ENCODE measurements at regions of chr6 and their contacts with region 1.

Region 1: GRCh38 chr6:20401205-20402091 is at the start of gene E2F3:
- DNase-seq: peak; percentile 98 to 100 (median 99)
- ATAC-seq: peak; percentile 83
- H3K4me3 ChIP-seq: peak within 1 kb of the TSS; percentile 71 to 86
- H3K4me3 Mint-ChIP-seq: peak within 1 kb of the TSS; percentile 96
- H3K27ac ChIP-seq: peak within 1 kb of the TSS; percentile 63 to 68
- H3K27ac Mint-ChIP-seq: peak within 1 kb of the TSS; percentile 72
- H3K4me1 ChIP-seq: peaks cover 10% of the 10 kb centered on the region
- H3K4me1 Mint-ChIP-seq: peaks cover 40% of the 10 kb centered on the region
- H3K27me3 ChIP-seq: no peaks in the 10 kb centered on the region
- H3K27me3 Mint-ChIP-seq: no peaks in the 10 kb centered on the region
- CTCF ChIP-seq: no peak
- total RNA-seq, gene E2F3: 5.0 to 6.2 TPM

Region 2: GRCh38 chr6:18792866-18793265 is 1608.6 kb before region 1 on chr6:
- CTCF ChIA-PET with region 1: no interaction called
- POLR2A ChIA-PET with region 1: no interaction called
- intact Hi-C with region 1: no loop called
- DNase-seq: no peak
- ATAC-seq: no peak
- H3K4me3 ChIP-seq: no peak overlapping the region
- H3K4me3 Mint-ChIP-seq: no peak overlapping the region
- H3K27ac ChIP-seq: no peak overlapping the region
- H3K27ac Mint-ChIP-seq: no peak overlapping the region
- H3K4me1 ChIP-seq: no peaks in the 10 kb centered on the region
- H3K4me1 Mint-ChIP-seq: no peaks in the 10 kb centered on the region
- H3K27me3 ChIP-seq: no peaks in the 10 kb centered on the region
- H3K27me3 Mint-ChIP-seq: no peaks in the 10 kb centered on the region
- CTCF ChIP-seq: no peak

Region 3: GRCh38 chr6:20212392-20213217 is 188.8 kb before region 1 on chr6 and contains the start of gene MBOAT1:
- CTCF ChIA-PET with region 1: interaction called, 5 read pairs
- POLR2A ChIA-PET with region 1: interaction called, 3 read pairs
- intact Hi-C with region 1: loop called (anchors 2 kb)
- DNase-seq: peak; percentile 22 to 81 (median 51)
- ATAC-seq: peak; percentile 63
- H3K4me3 ChIP-seq: peak within 1 kb of the TSS; percentile 57 to 62
- H3K4me3 Mint-ChIP-seq: peak within 1 kb of the TSS; percentile 95
- H3K27ac ChIP-seq: peak within 1 kb of the TSS; percentile 19 to 59
- H3K27ac Mint-ChIP-seq: peak within 1 kb of the TSS; percentile 90
- H3K4me1 ChIP-seq: peaks cover 20% of the 10 kb centered on the region
- H3K4me1 Mint-ChIP-seq: peaks cover 30% of the 10 kb centered on the region
- H3K27me3 ChIP-seq: no peaks in the 10 kb centered on the region
- H3K27me3 Mint-ChIP-seq: no peaks in the 10 kb centered on the region
- CTCF ChIP-seq: no peak
- total RNA-seq, gene MBOAT1: 5.9 to 6.5 TPM

Region 4: GRCh38 chr6:20319520-20320357 is 81.7 kb before region 1 on chr6:
- CTCF ChIA-PET with region 1: interaction called, 42 read pairs
- POLR2A ChIA-PET with region 1: interaction called, 106 read pairs
- intact Hi-C with region 1: loop called (anchors 1 to 2 kb)
- DNase-seq: peak; percentile 57 to 92 (median 76)
- ATAC-seq: peak; percentile 91
- H3K4me3 ChIP-seq: peak overlapping the region; percentile 46 to 61
- H3K4me3 Mint-ChIP-seq: peak overlapping the region; percentile 93
- H3K27ac ChIP-seq: peak overlapping the region; percentile 78 to 87
- H3K27ac Mint-ChIP-seq: peak overlapping the region; percentile 99
- H3K4me1 ChIP-seq: peaks cover 12% of the 10 kb centered on the region
- H3K4me1 Mint-ChIP-seq: peaks cover 21% of the 10 kb centered on the region
- H3K27me3 ChIP-seq: no peaks in the 10 kb centered on the region
- H3K27me3 Mint-ChIP-seq: no peaks in the 10 kb centered on the region
- CTCF ChIP-seq: no peak

Region 5: GRCh38 chr6:20334334-20334733 is 67.1 kb before region 1 on chr6:
- CTCF ChIA-PET with region 1: interaction called, 18 read pairs
- POLR2A ChIA-PET with region 1: interaction called, 3 read pairs
- intact Hi-C with region 1: no loop called
- DNase-seq: no peak
- ATAC-seq: no peak
- H3K4me3 ChIP-seq: no peak overlapping the region
- H3K4me3 Mint-ChIP-seq: no peak overlapping the region
- H3K27ac ChIP-seq: no peak overlapping the region
- H3K27ac Mint-ChIP-seq: no peak overlapping the region
- H3K4me1 ChIP-seq: peaks cover 19% of the 10 kb centered on the region
- H3K4me1 Mint-ChIP-seq: peaks cover 24% of the 10 kb centered on the region
- H3K27me3 ChIP-seq: no peaks in the 10 kb centered on the region
- H3K27me3 Mint-ChIP-seq: no peaks in the 10 kb centered on the region
- CTCF ChIP-seq: no peak

Region 6: GRCh38 chr6:20417819-20418218 is 16.4 kb after region 1 on chr6:
- CTCF ChIA-PET with region 1: interaction called, 18 read pairs
- POLR2A ChIA-PET with region 1: interaction called, 9 read pairs
- intact Hi-C with region 1: no loop called
- DNase-seq: no peak
- ATAC-seq: no peak
- H3K4me3 ChIP-seq: no peak overlapping the region
- H3K4me3 Mint-ChIP-seq: peak overlapping the region; percentile 13
- H3K27ac ChIP-seq: no peak overlapping the region
- H3K27ac Mint-ChIP-seq: no peak overlapping the region
- H3K4me1 ChIP-seq: peaks cover 27% of the 10 kb centered on the region
- H3K4me1 Mint-ChIP-seq: peaks cover 65% of the 10 kb centered on the region
- H3K27me3 ChIP-seq: no peaks in the 10 kb centered on the region
- H3K27me3 Mint-ChIP-seq: no peaks in the 10 kb centered on the region
- CTCF ChIP-seq: no peak

Region 7: GRCh38 chr6:20455251-20455940 is 53.9 kb after region 1 on chr6:
- CTCF ChIA-PET with region 1: no interaction called
- POLR2A ChIA-PET with region 1: no interaction called
- intact Hi-C with region 1: loop called in 1 of 2 experiments (anchors 5 kb)
- DNase-seq: no peak
- ATAC-seq: no peak
- H3K4me3 ChIP-seq: no peak overlapping the region
- H3K4me3 Mint-ChIP-seq: no peak overlapping the region
- H3K27ac ChIP-seq: no peak overlapping the region
- H3K27ac Mint-ChIP-seq: no peak overlapping the region
- H3K4me1 ChIP-seq: peaks cover 8% of the 10 kb centered on the region
- H3K4me1 Mint-ChIP-seq: peaks cover 45% of the 10 kb centered on the region
- H3K27me3 ChIP-seq: no peaks in the 10 kb centered on the region
- H3K27me3 Mint-ChIP-seq: no peaks in the 10 kb centered on the region
- CTCF ChIP-seq: no peak

Region 8: DNA sequence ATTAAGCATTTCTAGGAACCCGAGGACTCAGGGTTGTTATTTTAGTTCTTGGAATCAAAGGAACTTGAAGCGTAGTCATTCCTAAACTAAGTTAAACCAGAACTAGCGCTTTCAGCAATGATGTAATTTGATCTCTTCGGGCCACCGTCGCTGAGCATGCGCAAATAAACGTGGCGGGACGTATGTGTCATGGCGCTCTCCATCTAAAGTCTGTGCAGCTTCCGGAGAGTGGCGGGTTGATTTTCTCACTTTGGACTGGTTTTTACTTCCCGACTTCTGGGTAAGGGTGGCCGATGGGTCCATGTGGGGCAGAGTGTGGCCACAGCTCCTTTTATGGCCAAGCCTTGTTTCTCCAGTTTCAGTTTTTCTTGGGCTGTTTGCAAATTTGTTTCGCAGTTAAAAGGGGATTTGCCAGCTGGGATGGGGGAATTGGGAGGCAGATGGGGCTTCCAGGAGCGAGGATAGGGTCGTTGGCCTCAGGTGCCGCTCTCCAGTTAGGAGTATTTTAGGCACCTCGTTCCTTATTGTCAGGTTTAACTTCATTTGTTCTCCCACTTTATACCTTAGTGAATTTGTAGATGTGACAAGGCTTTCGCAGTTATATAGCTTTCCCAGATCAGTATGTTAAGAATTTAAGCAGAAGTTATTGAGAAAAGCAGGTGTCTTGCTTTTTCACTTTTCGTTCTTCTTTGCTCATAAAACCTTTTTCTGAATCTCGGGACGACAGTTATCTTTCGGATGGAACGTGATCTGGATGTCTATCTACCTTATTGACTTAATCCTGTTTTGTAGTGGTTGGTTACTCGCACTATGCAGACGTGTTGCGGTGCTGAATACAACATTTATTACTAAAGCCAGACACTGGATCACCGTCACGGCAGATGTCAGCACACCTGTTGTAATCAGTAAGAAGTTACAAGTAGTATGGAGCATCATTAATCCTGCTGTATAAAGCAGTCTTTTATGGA is 133.1 kb after region 1 on chr6 and contains the start of gene CDKAL1:
- CTCF ChIA-PET with region 1: interaction called, 8 read pairs
- POLR2A ChIA-PET with region 1: interaction called, 4 read pairs
- intact Hi-C with region 1: loop called (anchors 1 kb)
- DNase-seq: peak; percentile 73 to 94 (median 89)
- ATAC-seq: peak; percentile 88
- H3K4me3 ChIP-seq: peak within 1 kb of the TSS; percentile 65 to 74
- H3K4me3 Mint-ChIP-seq: peak within 1 kb of the TSS; percentile 97
- H3K27ac ChIP-seq: peak within 1 kb of the TSS; percentile 71 to 88
- H3K27ac Mint-ChIP-seq: peak within 1 kb of the TSS; percentile 99
- H3K4me1 ChIP-seq: peaks cover 13% of the 10 kb centered on the region
- H3K4me1 Mint-ChIP-seq: peaks cover 46% of the 10 kb centered on the region
- H3K27me3 ChIP-seq: no peaks in the 10 kb centered on the region
- H3K27me3 Mint-ChIP-seq: peaks cover 2% of the 10 kb centered on the region
- CTCF ChIP-seq: no peak
- total RNA-seq, gene CDKAL1: 21.2 to 22.4 TPM